ENCODE measurements at regions of chr17 and their contacts with region 1.

Region 1: DNA sequence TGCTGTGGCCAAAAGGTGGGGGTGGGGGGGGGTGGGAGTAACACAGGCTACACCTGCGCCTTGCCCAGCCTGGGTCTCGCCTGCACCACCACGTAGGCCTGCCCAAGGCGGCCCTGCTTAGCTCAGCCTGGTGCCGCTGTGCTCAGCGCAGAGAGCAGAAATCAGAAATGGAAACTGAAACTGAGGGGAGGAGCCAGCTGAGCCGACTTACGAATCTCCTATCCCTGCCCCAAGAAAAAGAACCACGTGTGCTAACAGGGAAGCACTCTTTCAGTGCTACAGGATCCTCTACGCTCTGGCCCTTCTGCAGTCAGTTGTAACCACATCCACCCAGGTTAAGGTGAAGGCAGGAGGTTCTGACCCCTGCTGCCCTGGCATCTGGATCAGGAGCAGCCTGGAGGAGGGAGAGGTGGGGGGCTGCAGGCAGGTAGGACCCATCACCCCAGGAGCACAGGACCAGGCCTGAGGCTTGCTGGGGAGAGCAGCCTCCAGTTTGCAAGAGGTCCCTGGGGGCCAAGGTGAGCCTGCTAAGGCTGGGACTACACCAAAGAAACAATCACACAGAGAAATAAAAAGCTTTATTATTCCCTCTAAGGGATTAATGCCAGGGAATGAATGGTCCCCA is at the start of gene DHX58:
- DNase-seq: peak; percentile 80
- ATAC-seq: peak; percentile 88 to 93
- H3K4me3 ChIP-seq: peak within 1 kb of the TSS; percentile 68
- H3K27ac ChIP-seq: peak within 1 kb of the TSS; percentile 91
- H3K4me1 ChIP-seq: peaks cover 31% of the 10 kb centered on the region
- H3K27me3 ChIP-seq: no peaks in the 10 kb centered on the region
- CTCF ChIP-seq: no peak
- total RNA-seq, gene DHX58: 40.4 TPM

Region 2: GRCh38 chr17:41966463-41967140 is 146.1 kb before region 1 on chr17 and contains the start of gene CNP:
- intact Hi-C with region 1: loop called (anchors 10 kb)
- DNase-seq: peak; percentile 95
- ATAC-seq: peak; percentile 95 to 96
- H3K4me3 ChIP-seq: peak within 1 kb of the TSS; percentile 70
- H3K27ac ChIP-seq: peak within 1 kb of the TSS; percentile 86
- H3K4me1 ChIP-seq: peaks cover 41% of the 10 kb centered on the region
- H3K27me3 ChIP-seq: no peaks in the 10 kb centered on the region
- CTCF ChIP-seq: no peak
- total RNA-seq, gene CNP: 46.3 TPM

Region 3: GRCh38 chr17:42212382-42212781 is 99.7 kb after region 1 on chr17:
- intact Hi-C with region 1: no loop called
- DNase-seq: no peak
- ATAC-seq: no peak
- H3K4me3 ChIP-seq: no peak overlapping the region
- H3K27ac ChIP-seq: no peak overlapping the region
- H3K4me1 ChIP-seq: no peaks in the 10 kb centered on the region
- H3K27me3 ChIP-seq: no peaks in the 10 kb centered on the region
- CTCF ChIP-seq: no peak

Measured in lower lobe of right lung (tissue), 2 donors.